IMR-90 (cell line): ENCODE measurements at regions of chr20 and their contacts with region 1.

Region 1: DNA sequence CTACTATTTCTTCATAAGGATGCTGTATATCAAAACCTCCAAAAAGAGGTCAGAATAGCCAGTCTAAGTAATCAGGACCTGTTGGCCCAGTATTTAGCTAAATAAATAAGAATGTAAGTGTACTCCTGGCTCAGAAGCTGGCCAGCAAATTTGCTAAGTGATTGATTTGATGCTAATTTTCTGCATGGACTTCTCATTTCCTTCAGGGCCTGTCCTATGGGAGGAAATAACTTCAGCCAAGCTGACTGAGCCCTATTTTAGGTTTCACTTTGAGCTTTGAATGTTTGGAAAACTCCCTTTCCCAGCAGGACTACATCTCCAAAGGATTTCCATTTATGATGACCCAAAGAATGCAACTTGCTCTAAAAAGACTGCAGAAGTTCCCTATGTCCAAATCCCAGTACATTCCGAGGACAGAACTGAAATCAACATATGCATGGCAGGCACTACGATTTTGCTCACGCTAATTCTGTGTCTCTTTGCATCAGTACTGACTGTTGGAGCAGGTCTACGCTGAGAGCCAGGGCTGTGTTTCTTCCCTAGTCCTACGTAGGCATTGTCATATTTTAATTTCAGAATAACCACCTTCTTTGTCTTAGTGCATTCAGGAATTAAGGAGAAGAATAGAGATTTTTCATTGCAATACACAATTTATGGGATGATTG is 441.4 kb upstream of the PLCB4 start:
- DNase-seq: peak; percentile 36
- ATAC-seq: peak; percentile 79
- H3K4me3 ChIP-seq: no peak overlapping the region
- H3K27ac ChIP-seq: no peak overlapping the region
- H3K4me1 ChIP-seq: peaks cover 2% of the 10 kb centered on the region
- H3K27me3 ChIP-seq: no peaks in the 10 kb centered on the region
- CTCF ChIP-seq: no peak
- POLR2A ChIP-seq: no peak
- RAD21 ChIP-seq: no peak

Region 2: DNA sequence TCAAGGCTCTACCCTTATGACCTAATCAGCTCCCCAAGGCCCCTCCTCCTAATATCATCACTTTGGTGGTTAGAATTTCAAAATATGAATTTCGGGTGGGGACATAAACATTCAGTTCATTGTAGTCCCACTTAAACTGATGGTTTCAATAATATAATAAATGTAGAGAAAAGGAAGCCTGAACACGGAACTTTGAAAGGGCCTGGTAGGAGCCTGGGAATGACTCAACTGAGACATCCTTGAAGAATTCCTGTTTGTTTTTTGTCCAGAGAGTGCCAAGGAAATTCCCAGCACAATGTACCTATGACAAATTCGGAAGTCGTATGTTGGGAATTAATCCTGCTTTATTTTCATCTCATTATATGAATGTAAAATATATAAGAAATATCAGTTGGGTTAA is 37.5 kb before region 1 on chr20:
- CTCF ChIA-PET with region 1: no interaction called
- POLR2A ChIA-PET with region 1: no interaction called
- dilution Hi-C with region 1: no loop called
- in situ Hi-C with region 1: no loop called
- intact Hi-C with region 1: loop called (anchors 5 kb)
- DNase-seq: peak; percentile 63
- ATAC-seq: no peak
- H3K4me3 ChIP-seq: no peak overlapping the region
- H3K27ac ChIP-seq: no peak overlapping the region
- H3K4me1 ChIP-seq: no peaks in the 10 kb centered on the region; the same call in 1 of the 2 replicates
- H3K27me3 ChIP-seq: no peaks in the 10 kb centered on the region
- CTCF ChIP-seq: no peak
- POLR2A ChIP-seq: no peak
- RAD21 ChIP-seq: no peak

Region 3: GRCh38 chr20:8709627-8710026 is 82.2 kb after region 1 on chr20:
- CTCF ChIA-PET with region 1: no interaction called
- POLR2A ChIA-PET with region 1: no interaction called
- dilution Hi-C with region 1: no loop called
- in situ Hi-C with region 1: no loop called
- intact Hi-C with region 1: no loop called
- DNase-seq: no peak
- ATAC-seq: no peak
- H3K4me3 ChIP-seq: no peak overlapping the region
- H3K27ac ChIP-seq: no peak overlapping the region
- H3K4me1 ChIP-seq: no peaks in the 10 kb centered on the region
- H3K27me3 ChIP-seq: no peaks in the 10 kb centered on the region
- CTCF ChIP-seq: no peak
- POLR2A ChIP-seq: no peak
- RAD21 ChIP-seq: no peak

Region 4: GRCh38 chr20:8782804-8783203 is 155.3 kb after region 1 on chr20:
- CTCF ChIA-PET with region 1: no interaction called
- POLR2A ChIA-PET with region 1: no interaction called
- dilution Hi-C with region 1: no loop called
- in situ Hi-C with region 1: no loop called
- intact Hi-C with region 1: no loop called
- DNase-seq: peak; percentile 43
- ATAC-seq: peak; percentile 48
- H3K4me3 ChIP-seq: no peak overlapping the region
- H3K27ac ChIP-seq: no peak overlapping the region
- H3K4me1 ChIP-seq: peaks cover 5% of the 10 kb centered on the region
- H3K27me3 ChIP-seq: no peaks in the 10 kb centered on the region
- CTCF ChIP-seq: no peak
- POLR2A ChIP-seq: no peak
- RAD21 ChIP-seq: no peak